Activated naive CD4-positive, alpha-beta T cell treated with anti-CD3 and anti-CD28 coated beads for 36 hours (primary cell): ENCODE measurements at regions of chr2 and their contacts with region 1.

Region 1: GRCh38 chr2:61585383-61585782 is 47.2 kb upstream of the XPO1 start:
- DNase-seq: no peak
- H3K4me3 Mint-ChIP-seq: no peak overlapping the region
- H3K27ac Mint-ChIP-seq: no peak overlapping the region
- H3K4me1 Mint-ChIP-seq: peaks cover 9% of the 10 kb centered on the region
- H3K27me3 Mint-ChIP-seq: no peaks in the 10 kb centered on the region

Region 2: GRCh38 chr2:61620244-61621159 is 35.1 kb after region 1 on chr2:
- CTCF ChIA-PET with region 1: no interaction called
- intact Hi-C with region 1: loop called (anchors 5 kb)
- DNase-seq: peak; percentile 10
- H3K4me3 Mint-ChIP-seq: no peak overlapping the region
- H3K27ac Mint-ChIP-seq: no peak overlapping the region
- H3K4me1 Mint-ChIP-seq: peaks cover 3% of the 10 kb centered on the region
- H3K27me3 Mint-ChIP-seq: no peaks in the 10 kb centered on the region